ENCODE measurements at regions of chr16 and their contacts with region 1.

Region 1: GRCh38 chr16:65671-66137 is 6.7 kb downstream of the RHBDF1 start:
- DNase-seq: peak; percentile 92
- ATAC-seq: peak; percentile 80
- H3K4me3 Mint-ChIP-seq: no peak overlapping the region
- H3K27ac Mint-ChIP-seq: no peak overlapping the region
- H3K4me1 Mint-ChIP-seq: peaks cover 19% of the 10 kb centered on the region
- H3K27me3 Mint-ChIP-seq: no peaks in the 10 kb centered on the region
- CTCF ChIP-seq: peak; percentile 93

Region 2: DNA sequence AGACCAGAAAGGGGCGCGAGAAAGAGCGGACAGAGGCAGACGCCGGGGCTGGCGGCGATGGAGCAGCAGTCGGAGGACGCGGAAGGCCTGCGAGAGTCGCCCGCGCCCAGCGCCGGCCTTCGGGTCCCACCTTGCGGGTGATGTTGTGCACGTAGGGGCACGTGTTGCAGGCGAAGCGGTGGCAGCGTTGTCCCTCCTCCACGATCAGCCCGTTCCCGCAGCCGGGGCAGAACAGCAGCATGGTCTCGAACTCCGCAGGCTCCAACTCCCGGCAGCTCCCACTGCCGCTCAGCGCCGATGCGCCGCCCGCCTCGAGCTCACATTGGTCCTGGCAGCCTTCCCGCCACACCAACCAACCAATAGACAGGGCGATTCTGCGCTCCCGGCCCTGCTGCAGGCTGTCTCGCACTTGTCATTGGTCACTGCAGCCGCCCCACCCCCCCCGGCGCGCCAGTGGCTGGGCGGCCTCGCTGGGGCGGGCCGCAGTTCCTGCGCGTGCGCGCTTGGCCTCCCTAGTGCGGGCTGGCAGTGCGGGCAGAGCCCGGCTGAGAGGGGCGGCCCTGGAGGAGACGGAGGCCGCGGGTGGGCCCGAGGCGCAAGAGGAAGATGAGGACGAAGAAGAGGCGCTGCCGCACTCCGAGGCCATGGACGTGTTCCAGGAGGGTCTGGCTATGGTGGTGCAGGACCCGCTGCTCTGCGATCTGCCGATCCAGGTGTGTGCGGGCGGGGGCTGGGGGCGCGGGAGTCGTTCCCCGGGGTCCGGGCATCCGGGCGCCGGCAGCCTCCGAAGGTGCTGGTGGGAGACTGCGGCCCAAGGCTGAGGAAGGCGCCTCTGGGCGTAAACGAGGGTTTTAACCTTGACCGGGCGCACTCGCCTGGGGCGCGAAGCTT is 12.1 kb before region 1 on chr16 and contains the starts of genes POLR3K and SNRNP25:
- CTCF ChIA-PET with region 1: interaction called, 39 read pairs
- POLR2A ChIA-PET with region 1: interaction called, 16 read pairs
- DNase-seq: peak; percentile 98
- ATAC-seq: peak; percentile 98
- H3K4me3 Mint-ChIP-seq: peak within 1 kb of the TSS; percentile 99
- H3K27ac Mint-ChIP-seq: peak within 1 kb of the TSS; percentile 99
- H3K4me1 Mint-ChIP-seq: peaks cover 13% of the 10 kb centered on the region
- H3K27me3 Mint-ChIP-seq: no peaks in the 10 kb centered on the region; the same call in 1 of the 2 replicates
- CTCF ChIP-seq: no peak
- total RNA-seq, gene POLR3K: 37.9 to 40.1 TPM (median 38.6 TPM) in 3 replicates
- total RNA-seq, gene SNRNP25: 51.6 to 55.9 TPM (median 54.7 TPM) in 3 replicates

Region 3: DNA sequence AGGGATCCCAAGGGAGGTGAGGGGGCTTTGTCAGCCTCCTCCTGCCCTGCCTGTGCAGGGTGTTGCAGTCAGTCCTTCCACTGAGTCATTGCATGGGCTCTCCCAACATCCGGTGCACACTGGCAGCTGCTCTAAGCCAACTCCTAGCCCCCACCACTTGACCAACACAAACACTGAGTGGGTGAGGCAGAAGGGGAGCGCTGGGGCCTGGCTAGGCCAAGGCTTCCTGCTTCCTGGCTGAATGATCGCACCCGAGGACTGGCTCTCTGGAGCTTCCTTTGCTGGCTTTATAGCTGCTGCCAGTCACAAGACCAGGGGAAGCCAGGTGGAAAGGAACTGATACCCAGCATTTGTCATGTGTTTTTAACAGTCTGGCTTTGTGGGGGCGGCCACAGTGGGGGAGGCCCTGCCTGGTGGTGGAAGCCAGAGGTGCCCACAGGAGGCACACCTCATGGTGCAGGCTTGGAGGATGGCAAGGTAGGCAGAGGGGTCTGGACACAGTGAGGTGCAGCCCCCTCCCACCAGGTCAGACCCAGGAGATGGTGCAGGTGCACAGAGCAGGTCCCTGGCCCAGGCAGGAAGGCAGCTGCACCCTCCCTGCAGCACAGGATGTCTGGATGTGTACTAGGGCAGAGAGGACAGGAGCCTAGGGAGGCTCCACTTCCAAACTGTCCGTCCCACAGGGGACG is 19.2 kb after region 1 on chr16:
- CTCF ChIA-PET with region 1: interaction called, 493 read pairs
- POLR2A ChIA-PET with region 1: no interaction called
- DNase-seq: no peak
- ATAC-seq: no peak
- H3K4me3 Mint-ChIP-seq: no peak overlapping the region
- H3K27ac Mint-ChIP-seq: peak overlapping the region; percentile 45; the same call in 1 of the 2 replicates
- H3K4me1 Mint-ChIP-seq: peaks cover 8% of the 10 kb centered on the region; the same call in 1 of the 2 replicates
- H3K27me3 Mint-ChIP-seq: no peaks in the 10 kb centered on the region
- CTCF ChIP-seq: no peak

Region 4: DNA sequence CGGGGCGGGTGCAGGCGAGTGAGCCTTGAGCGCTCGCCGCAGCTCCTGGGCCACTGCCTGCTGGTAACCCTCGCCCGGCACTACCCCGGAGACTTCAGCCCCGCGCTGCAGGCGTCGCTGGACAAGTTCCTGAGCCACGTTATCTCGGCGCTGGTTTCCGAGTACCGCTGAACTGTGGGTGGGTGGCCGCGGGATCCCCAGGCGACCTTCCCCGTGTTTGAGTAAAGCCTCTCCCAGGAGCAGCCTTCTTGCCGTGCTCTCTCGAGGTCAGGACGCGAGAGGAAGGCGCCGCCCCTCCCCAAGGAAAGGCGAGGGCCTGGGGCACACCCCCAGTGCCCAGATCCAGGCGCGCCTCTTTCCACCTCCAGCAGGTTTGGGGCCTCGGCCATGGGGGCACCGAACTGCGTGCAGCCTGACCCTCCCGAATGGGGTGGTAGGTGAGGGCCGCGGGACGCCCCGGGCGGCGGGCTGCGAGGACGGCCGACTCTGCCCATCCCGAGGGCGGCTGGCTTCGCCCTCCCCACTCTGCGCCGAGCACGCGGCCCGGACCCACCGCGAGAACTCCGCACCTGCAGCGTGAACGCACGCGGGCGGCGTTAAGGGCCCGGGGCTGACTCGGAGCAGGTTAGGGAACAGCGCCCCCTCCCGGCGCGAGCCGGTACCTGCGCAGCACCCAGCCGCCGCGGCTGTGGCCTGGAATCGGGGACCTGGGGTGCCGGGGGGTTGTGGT is 115.4 kb after region 1 on chr16:
- CTCF ChIA-PET with region 1: interaction called, 11 read pairs
- POLR2A ChIA-PET with region 1: no interaction called
- DNase-seq: peak; percentile 93
- ATAC-seq: peak; percentile 65
- H3K4me3 Mint-ChIP-seq: peak overlapping the region; percentile 56
- H3K27ac Mint-ChIP-seq: no peak overlapping the region
- H3K4me1 Mint-ChIP-seq: no peaks in the 10 kb centered on the region
- H3K27me3 Mint-ChIP-seq: peaks cover 41% of the 10 kb centered on the region
- CTCF ChIP-seq: peak; percentile 99

Region 5: DNA sequence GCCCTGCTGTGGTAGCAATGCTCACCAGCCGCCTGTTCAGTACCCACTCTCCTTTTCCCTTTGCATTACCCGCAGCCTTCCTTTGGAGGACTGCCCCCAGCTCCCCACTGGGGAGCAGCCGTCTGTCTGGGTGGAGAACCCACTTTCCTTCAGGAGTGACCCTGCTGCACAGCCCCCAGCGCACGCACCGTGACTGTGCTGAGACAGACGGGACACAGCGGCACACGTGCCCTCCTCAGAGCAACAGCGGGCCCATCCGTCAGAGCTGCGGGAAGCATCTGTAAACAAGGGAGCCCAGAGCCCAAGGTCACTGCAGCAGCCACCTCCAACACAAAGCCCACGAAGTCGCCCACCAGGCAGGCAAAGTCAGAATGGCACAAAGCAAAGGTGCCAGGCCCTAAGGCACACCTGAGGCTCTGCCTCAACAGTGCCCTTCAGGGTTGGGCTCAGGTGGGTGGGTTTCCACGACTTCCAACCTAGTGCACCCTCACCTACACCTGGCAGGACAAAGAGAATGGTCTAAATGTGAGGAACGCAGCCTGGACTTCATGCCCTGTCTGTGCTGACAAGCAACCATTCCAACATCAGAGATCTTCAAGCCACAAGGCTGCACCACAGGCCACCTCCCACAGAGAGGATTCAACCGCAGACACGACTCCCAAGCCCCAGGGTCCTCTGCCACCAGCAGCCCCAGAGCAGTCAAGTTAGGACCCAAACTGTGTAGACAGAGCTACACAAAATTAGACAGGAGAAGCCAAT is 276.9 kb after region 1 on chr16:
- CTCF ChIA-PET with region 1: no interaction called
- POLR2A ChIA-PET with region 1: no interaction called
- DNase-seq: no peak
- ATAC-seq: no peak
- H3K4me3 Mint-ChIP-seq: no peak overlapping the region
- H3K27ac Mint-ChIP-seq: peak overlapping the region; percentile 81
- H3K4me1 Mint-ChIP-seq: peaks cover 11% of the 10 kb centered on the region
- H3K27me3 Mint-ChIP-seq: no peaks in the 10 kb centered on the region
- CTCF ChIP-seq: no peak

Region 6: GRCh38 chr16:714558-715476 is 649.1 kb after region 1 on chr16 and contains the start of gene METRN:
- CTCF ChIA-PET with region 1: no interaction called
- POLR2A ChIA-PET with region 1: no interaction called
- DNase-seq: peak; percentile 93
- ATAC-seq: peak; percentile 72
- H3K4me3 Mint-ChIP-seq: peak within 1 kb of the TSS; percentile 63
- H3K27ac Mint-ChIP-seq: no peak within 1 kb of the TSS
- H3K4me1 Mint-ChIP-seq: peaks cover 14% of the 10 kb centered on the region
- H3K27me3 Mint-ChIP-seq: peaks cover 40% of the 10 kb centered on the region
- CTCF ChIP-seq: no peak
- total RNA-seq, gene METRN: 30.9 to 64.3 TPM (median 61.4 TPM) in 3 replicates

Measured in WTC11 (cell line).